Left cardiac atrium (tissue), 4 donors: ENCODE measurements at regions of chr16 and their contacts with region 1.

Region 1: DNA sequence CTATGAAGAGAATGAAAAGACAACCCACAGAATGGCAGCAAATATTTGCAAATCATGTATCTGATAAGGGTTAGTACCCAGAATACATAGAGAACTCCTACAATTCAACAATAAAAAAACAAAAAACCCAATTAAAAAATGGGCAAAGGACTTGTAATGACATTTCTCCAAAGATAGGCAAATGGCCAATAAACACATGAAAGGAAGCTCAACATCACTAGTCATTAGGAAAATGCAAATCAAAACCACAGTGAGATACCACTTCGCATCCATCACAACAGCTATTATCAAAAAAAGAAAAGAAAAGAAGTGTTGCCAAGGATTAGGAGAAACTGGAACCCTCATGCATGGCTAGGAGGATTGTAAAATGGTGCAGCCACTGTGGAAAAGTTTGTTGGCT is 45.1 kb upstream of the ARL6IP1 start:
- DNase-seq: no peak
- ATAC-seq: no peak

Region 2: DNA sequence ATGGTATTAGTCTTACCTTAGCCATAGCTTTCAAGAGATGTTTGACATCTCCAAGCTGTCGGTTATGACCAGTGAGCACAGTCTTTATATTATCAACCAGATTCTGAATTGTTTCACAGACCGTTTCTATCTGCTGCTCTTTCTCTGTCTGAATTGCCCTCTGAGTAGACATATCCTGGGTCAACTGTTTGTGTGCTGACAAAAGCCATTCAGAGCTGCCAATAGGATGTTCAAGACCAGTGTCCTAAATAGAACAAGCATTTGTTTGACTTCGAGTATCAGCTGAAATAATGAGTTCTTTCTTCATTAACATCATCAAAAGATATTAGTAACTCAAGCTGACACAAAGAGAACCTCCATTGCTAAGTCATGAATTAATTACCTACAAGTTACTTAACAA is 30.1 kb before region 1 on chr16:
- intact Hi-C with region 1: loop called in 1 of 2 experiments (anchors 5 kb)
- DNase-seq: no peak
- ATAC-seq: no peak

Region 3: GRCh38 chr16:18959031-18959505 is 112.7 kb after region 1 on chr16:
- intact Hi-C with region 1: no loop called
- DNase-seq: no peak
- ATAC-seq: peak; percentile 70 to 78